Activated B cell treated with CpG ODN at 0.5 μM for 24 hours (primary cell): ENCODE measurements at regions of chr16 and their contacts with region 1.

Region 1: DNA sequence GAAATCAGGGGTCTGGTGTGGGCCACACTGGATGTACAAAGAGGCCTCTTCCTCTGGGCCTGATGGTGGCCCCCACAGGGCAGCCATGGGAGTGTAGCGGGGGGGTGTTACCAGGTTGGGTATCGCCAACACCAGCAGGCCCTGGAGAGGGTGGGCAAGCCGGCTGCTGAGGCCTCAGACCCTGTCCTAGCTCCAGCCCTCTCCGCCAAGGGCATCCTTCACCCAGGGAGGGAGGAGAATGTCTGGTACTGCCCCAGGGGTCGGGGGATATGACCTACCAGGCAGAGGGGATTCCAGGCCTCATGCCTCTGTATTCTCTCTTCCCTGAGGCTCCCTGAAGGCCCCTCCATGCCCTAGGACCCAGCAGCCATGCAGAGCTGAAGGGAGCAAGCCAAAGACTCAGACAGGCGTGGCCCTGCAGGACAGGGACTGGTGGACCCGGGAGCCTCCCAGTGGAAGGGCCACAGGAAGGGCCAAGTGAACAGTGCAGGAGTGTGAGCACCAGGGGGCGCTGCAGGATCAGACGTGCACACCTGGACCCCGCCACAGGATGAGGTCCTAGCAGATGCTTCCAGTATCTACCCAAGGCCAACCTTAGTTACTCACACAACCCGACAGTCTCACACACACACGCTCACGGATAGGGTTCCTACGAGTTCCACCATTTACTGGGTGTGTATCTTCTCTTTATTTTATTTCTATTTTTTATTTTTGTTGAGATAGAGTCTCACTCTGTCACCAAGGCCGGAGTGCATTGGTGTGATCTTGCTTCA is 10.9 kb upstream of the CES4A start:
- DNase-seq: peak; percentile 83
- ATAC-seq: peak; percentile 99
- H3K4me3 Mint-ChIP-seq: no peak overlapping the region
- H3K27ac Mint-ChIP-seq: no peak overlapping the region
- H3K4me1 Mint-ChIP-seq: no peaks in the 10 kb centered on the region
- H3K27me3 Mint-ChIP-seq: peaks cover 6% of the 10 kb centered on the region
- CTCF ChIP-seq: peak; percentile 51

Region 2: GRCh38 chr16:67100569-67101310 is 123.2 kb after region 1 on chr16:
- CTCF ChIA-PET with region 1: interaction called, 3 read pairs
- POLR2A ChIA-PET with region 1: no interaction called
- intact Hi-C with region 1: loop called (anchors 1 kb)
- DNase-seq: no peak
- ATAC-seq: no peak
- H3K4me3 Mint-ChIP-seq: no peak overlapping the region
- H3K27ac Mint-ChIP-seq: no peak overlapping the region
- H3K4me1 Mint-ChIP-seq: peaks cover 16% of the 10 kb centered on the region
- H3K27me3 Mint-ChIP-seq: no peaks in the 10 kb centered on the region
- CTCF ChIP-seq: no peak

Region 3: GRCh38 chr16:67146523-67147357 is 169.2 kb after region 1 on chr16:
- CTCF ChIA-PET with region 1: no interaction called
- POLR2A ChIA-PET with region 1: no interaction called
- intact Hi-C with region 1: no loop called
- DNase-seq: no peak
- ATAC-seq: no peak
- H3K4me3 Mint-ChIP-seq: no peak overlapping the region
- H3K27ac Mint-ChIP-seq: no peak overlapping the region
- H3K4me1 Mint-ChIP-seq: peaks cover 5% of the 10 kb centered on the region
- H3K27me3 Mint-ChIP-seq: peaks cover 17% of the 10 kb centered on the region
- CTCF ChIP-seq: no peak

Region 4: DNA sequence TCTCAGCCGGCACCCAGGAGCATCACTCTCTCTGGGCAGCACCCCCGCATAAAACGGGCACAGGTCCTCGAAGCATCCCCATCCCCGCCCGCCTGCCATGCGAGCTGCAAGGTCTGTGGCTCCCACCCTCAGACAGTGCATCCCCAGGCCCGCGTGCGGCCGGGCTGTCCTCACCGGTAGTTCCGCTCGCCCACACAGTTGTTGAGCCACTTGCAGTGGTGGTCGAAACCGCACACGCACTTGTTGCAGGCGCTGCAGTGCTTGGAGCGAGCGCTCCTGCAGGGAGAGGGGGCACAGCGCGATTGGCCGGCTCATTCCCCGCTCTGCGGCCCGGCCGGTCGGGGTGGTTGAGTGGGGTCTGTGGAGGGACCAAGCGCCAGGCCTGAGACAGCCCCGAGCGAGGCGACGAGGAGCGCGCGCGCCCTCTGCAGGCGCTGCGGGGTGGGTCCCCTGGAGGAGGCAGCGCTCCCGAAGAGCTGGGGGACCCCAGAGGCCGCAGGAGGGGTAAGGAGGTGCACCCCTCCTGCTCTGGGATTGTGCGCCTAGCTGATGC is 421.7 kb after region 1 on chr16:
- CTCF ChIA-PET with region 1: no interaction called
- POLR2A ChIA-PET with region 1: no interaction called
- intact Hi-C with region 1: loop called (anchors 1 kb)
- DNase-seq: peak; percentile 55
- ATAC-seq: peak; percentile 82
- H3K4me3 Mint-ChIP-seq: no peak overlapping the region
- H3K27ac Mint-ChIP-seq: no peak overlapping the region
- H3K4me1 Mint-ChIP-seq: peaks cover 1% of the 10 kb centered on the region
- H3K27me3 Mint-ChIP-seq: peaks cover 9% of the 10 kb centered on the region
- CTCF ChIP-seq: peak; percentile 40

Region 5: GRCh38 chr16:67447508-67448076 is 470.1 kb after region 1 on chr16:
- CTCF ChIA-PET with region 1: interaction called, 3 read pairs
- POLR2A ChIA-PET with region 1: no interaction called
- intact Hi-C with region 1: loop called (anchors 5 kb)
- DNase-seq: peak; percentile 46
- ATAC-seq: peak; percentile 82
- H3K4me3 Mint-ChIP-seq: no peak overlapping the region
- H3K27ac Mint-ChIP-seq: no peak overlapping the region
- H3K4me1 Mint-ChIP-seq: no peaks in the 10 kb centered on the region
- H3K27me3 Mint-ChIP-seq: no peaks in the 10 kb centered on the region
- CTCF ChIP-seq: no peak